ENCODE measurements at regions of chr7 and their contacts with region 1.

Region 1: DNA sequence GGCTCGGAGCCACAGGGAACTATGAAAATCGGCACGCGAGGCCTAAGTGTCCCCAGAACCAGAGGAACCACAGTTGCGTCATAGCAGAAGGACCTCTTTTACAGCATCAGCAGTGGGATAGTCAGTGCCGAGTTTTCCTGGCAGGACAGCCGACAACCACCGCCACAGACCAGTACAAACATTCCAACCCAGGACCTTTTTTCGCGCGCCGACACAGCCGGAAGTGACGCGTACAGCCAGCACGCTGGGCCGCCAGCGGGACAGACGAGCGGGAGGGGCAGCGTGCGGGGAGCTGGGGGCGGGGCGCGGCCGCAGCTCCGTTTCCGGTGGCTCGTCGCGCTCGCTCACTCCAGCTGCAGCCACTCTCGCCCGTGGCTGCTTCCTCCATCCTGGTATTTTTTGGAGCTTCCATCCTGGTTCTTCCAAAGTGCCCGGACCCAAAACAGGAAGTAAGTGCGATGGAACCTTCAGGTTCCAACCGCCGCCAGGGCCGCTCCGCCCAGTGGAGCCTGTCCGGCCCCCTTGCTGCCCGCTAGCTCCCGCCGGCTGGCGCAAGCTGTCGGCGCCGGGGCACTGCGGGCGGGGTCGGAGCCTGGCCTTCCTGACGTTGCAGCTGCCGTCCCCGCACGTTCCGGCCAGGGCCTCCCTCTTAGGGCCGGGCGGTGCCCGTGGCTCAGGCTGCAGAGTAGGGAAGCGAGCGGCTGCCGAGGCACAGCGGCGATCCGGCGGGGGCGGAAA is at the start of gene DMTF1:
- DNase-seq: peak; percentile 94 to 97 (median 95)
- ATAC-seq: peak; percentile 95
- H3K4me3 ChIP-seq: peak within 1 kb of the TSS; percentile 52
- H3K4me1 ChIP-seq: peaks cover 33% of the 10 kb centered on the region
- CTCF ChIP-seq: no peak
- total RNA-seq, gene DMTF1: 48.4 to 94.5 (median 91.9) TPM

Region 2: DNA sequence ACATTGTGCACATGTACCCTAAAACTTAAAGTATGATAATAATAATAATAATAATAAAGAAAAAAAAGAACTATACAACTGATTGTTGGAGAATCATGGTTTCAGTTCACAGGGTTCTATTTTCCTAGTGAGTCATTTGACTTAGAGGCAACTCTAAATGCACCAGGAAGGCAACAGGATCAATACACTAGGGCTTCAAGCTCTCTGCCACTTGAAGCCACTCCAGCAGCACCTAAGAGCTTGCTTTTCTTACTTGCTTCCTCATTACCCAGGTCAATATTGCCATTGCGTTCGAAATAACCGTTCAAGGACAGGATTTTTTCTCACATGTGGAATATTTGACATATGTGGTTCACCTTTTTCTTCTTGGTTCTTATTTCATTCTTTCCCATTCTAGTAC is 318.9 kb before region 1 on chr7:
- intact Hi-C with region 1: no loop called
- DNase-seq: peak in 1 of 3 donors; percentile 21
- ATAC-seq: peak; percentile 80
- H3K4me3 ChIP-seq: no peak overlapping the region
- H3K4me1 ChIP-seq: no peaks in the 10 kb centered on the region
- CTCF ChIP-seq: no peak

Region 3: GRCh38 chr7:86926732-86927131 is 225.5 kb before region 1 on chr7:
- intact Hi-C with region 1: loop called (anchors 5 to 10 kb)
- DNase-seq: peak in 1 of 3 donors; percentile 58
- ATAC-seq: peak; percentile 76
- H3K4me3 ChIP-seq: no peak overlapping the region
- H3K4me1 ChIP-seq: no peaks in the 10 kb centered on the region
- CTCF ChIP-seq: peak; percentile 45

Region 4: DNA sequence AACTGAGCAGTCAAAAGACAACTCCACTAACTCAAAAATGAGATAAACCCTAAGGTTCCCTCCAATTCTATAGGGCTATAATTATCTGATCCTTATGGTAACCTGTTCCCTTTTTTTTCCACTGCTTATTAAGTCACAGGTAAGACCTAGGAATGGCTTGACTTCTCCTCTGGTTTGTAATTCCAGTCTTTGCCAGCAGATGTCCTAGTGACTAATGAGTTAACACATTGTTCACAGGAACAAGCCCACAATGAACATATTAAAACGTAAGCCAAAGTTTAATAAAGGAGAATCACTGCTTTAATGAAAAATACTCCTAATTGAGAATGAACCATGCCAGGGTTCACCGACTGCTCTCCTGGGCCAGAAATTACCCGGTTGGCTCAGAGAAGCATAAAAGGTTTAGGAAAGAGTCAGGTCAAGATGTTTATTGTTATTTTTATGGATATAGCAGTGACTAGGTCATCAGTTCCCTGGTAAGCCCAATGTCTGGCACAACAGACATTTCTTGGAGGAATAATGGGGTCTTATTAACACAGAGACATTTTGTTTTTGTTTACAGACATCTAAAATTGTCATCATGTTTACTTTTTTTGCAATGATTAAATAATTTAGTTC is 213.0 kb before region 1 on chr7:
- intact Hi-C with region 1: loop called in 1 of 2 experiments (anchors 10 kb)
- DNase-seq: peak in 1 of 3 donors; percentile 92
- ATAC-seq: peak; percentile 81
- H3K4me3 ChIP-seq: no peak overlapping the region
- H3K4me1 ChIP-seq: peaks cover 3% of the 10 kb centered on the region
- CTCF ChIP-seq: peak; percentile 34

Region 5: GRCh38 chr7:87219545-87220025 is 67.3 kb after region 1 on chr7 and contains the start of gene TMEM243:
- intact Hi-C with region 1: loop called in 1 of 2 experiments (anchors 10 kb)
- DNase-seq: peak; percentile 83 to 93 (median 87)
- ATAC-seq: peak; percentile 87
- H3K4me3 ChIP-seq: peak within 1 kb of the TSS; percentile 83
- H3K4me1 ChIP-seq: peaks cover 6% of the 10 kb centered on the region
- CTCF ChIP-seq: no peak
- total RNA-seq, gene TMEM243: 13.8 to 17.5 (median 17.1) TPM

Region 6: DNA sequence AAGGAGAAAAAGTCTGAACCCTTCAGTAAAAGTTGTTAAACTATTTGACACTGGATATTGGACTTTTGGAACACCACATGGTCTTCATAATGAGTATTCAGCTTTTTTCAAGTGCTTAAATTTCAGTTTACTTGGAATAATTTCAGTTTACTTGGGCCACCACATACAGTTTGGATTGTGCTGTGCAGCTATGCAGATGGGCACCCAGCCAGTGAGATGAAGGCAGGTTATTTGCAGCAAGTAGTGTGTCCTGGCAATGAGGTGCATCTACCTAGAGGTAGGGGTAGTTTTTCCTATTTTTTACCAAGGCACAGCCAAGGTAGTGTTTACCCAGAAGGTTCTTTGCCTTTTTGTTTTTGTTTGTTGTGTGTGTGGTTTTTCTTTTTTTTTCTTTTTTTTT is 757.9 kb after region 1 on chr7:
- intact Hi-C with region 1: no loop called
- DNase-seq: no peak
- ATAC-seq: no peak
- H3K4me3 ChIP-seq: no peak overlapping the region
- H3K4me1 ChIP-seq: no peaks in the 10 kb centered on the region
- CTCF ChIP-seq: no peak